ENCODE measurements at regions of chr1 and their contacts with region 1.

Region 1: DNA sequence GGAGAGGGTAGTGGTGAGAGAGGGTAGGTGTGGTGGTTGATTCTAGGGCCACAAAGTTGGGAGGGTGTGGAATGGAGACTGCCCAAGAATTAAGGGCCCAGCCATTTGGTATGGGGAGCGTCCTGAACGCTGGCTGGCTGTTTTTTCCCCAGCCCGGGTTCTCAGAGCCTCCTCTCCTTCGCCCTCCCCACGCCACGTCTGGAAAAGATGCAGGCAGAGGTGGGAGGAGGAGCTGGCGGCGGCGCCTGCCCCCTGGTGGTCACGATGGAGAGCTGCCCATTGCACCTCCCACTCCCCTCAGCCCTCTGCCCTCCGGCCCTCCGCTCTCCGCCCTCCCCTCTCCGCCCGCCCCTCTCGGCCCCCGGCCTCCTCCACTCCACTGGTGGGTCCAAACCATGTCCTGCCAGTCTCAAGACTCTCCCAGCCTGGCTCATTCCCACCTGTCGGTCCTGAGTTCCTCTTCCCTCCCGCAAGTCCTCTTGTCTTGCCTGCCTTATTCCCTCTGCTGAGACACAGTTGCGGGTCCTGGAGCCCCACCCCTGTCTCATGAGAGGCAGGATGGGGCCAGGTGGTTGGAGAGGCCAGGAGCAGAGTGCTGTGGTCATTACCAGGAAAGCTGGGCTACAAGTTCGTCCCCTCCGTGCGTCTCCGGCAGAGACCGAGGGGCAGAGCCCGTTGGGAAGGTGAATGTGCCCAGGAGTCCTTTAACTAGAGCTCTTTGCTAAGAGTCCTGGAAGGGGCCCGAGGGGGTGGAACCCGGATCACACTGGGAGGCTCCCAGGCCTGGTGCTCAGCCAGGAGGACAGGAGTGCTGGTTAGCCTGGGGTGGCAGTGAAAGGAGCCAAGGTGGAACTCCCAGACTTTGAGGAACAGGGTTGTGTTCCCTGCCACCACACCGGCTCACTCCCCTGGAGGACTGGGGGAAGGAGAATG is 22.6 kb downstream of the ETNK2 start:
- DNase-seq: no peak
- H3K4me3 ChIP-seq: no peak overlapping the region
- CTCF ChIP-seq: peak; percentile 96

Region 2: DNA sequence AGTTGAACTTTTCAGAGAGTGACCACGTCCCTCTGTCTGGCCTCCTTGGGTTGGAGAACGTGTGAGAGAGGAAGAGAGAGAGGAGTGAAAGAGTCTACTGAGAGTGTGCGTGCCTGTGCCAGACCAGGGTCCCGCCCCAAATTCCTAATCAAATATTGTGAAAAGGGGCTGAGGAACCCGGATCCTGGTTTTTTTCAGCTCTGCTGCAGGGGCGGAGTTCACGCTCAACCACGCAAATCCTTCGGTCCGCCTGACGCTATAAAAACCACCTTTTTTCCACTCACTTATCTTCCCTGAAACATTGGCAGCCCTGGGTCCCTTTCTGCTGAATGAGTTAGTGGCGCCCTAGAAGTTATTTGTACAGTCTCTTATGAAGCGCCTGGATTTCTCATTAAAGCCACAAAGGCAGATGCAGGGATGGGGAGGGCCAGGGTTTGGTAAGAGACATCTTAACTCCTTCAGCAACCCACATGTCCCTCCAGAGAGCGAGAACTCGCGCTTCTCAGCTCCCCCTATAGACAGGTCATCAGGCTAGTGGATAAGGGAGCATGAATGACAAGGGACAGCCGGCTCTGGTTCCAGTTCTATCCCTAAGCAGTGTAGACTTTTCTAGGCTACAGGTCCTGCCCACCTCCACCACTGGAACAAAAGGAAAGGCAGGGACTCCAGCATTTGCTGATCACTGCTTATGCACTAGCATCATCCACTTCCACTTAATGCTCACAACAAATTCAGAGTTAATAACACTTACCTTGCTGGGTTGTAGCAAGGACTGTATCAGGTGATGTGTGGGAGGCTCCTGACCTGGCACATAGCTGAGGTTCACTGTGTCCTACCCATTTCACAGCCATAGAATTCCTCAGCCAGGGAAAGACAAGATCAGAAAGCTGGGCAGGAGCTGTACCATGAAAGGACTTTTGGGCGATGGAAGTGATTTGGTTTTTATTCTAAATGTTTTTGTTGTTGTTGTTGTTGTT is 777.9 kb before region 1 on chr1 and contains the start of gene FMOD:
- CTCF ChIA-PET with region 1: no interaction called
- POLR2A ChIA-PET with region 1: no interaction called
- DNase-seq: no peak
- H3K4me3 ChIP-seq: peak within 1 kb of the TSS; percentile 6; the same call in 1 of the 2 replicates
- CTCF ChIP-seq: no peak

Region 3: DNA sequence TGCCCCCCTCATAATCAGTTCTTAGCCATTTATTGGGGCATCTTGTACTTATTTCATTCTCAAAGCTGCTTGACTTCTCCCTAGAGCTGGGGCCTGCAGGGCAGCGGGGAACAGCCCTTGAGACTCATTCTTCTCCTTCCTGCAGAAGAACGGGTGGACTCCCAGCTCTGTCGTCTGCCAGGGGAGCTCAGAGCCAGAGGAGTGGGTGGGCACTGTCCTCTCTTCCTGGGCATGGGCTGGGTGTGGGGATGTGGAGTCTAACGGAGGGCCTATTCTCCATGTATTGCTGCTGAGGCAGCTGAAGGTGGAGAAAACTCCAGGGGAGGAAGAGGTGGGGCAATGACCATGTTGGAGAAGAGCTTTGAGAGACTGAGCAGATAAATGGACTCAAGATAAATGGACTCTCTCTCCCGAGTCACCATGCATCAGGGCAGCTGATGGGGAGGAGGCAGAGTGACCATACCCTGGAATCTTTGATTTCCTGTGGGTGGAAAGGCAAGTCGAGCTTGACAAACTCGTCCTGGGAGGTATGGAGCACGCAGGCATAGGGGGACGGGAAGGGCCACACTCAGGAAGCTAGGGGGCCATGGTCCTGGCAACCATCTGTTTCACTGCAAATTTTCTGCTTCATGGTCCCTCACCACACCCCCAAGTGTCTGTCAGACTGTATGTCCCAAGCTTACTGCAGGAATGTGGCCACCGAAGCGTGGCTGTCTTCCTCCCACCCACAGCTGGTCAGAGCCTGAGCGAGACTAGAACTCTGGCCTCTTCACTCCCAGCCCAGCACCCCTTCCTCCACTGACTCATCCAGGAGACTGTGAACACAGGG is 559.5 kb before region 1 on chr1:
- CTCF ChIA-PET with region 1: no interaction called
- POLR2A ChIA-PET with region 1: no interaction called
- DNase-seq: no peak
- H3K4me3 ChIP-seq: no peak overlapping the region
- CTCF ChIP-seq: no peak

Region 4: DNA sequence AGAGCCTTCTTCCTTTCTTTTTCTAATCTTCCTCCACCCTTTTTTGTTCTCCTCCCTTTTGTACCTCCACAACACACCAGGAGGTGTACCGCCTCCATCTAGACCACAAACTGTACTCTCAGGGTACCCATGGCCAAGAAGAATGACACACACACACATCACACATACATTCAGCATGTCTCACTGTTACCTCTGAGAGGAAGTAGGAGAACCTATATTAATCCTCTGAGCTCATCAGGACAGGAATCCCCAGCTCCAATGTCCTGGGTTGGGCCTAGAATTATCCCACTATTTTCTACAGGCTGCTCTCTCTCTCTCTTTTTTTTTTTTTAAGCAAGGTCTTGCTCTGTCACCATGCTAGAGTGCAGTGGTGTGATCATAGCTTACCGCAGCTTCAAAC is 465.9 kb before region 1 on chr1:
- CTCF ChIA-PET with region 1: no interaction called
- POLR2A ChIA-PET with region 1: no interaction called
- DNase-seq: peak; percentile 82
- H3K4me3 ChIP-seq: no peak overlapping the region
- CTCF ChIP-seq: no peak

Region 5: DNA sequence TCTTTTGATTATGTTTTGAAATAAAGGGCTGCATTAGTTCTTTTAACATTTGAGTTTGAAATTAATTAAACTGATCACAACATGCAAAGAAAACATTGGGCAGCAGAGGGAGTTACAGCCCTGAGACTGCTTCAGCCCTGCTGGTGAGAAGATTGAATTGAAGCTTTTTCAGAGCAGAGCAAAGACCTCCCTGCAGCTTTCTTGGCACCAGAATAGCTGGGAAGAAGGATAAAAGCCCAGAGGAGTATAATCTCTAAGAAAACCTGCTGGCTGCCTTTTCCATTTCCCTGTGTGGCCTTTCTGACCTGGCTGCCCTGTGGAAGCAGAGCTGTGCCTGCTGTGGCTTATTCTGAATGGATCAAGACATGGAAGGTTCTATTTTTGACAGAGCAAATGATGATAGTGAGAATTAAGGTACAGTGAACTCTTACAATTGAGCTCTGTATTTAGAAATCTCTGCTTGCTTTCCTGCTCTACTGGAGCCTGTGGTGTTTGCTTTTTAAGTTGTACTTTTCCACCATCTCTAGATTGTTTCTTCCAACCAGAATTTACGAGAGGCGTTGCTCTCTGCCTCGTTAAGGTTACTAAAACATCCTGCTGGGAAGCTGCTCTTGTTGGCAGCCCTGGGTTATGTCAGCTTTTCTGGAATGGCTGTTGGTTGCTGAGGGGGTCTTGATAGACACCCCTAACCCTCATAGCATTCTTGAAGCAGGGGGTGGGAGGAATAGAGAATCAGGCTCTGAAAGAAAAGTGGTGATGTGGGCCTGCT is 257.9 kb before region 1 on chr1:
- CTCF ChIA-PET with region 1: interaction called, 1,069 read pairs
- POLR2A ChIA-PET with region 1: interaction called, 27 read pairs
- DNase-seq: no peak
- H3K4me3 ChIP-seq: no peak overlapping the region
- CTCF ChIP-seq: peak; percentile 91

Region 6: GRCh38 chr1:203888807-203889251 is 240.4 kb before region 1 on chr1:
- CTCF ChIA-PET with region 1: interaction called, 11 read pairs
- POLR2A ChIA-PET with region 1: no interaction called
- DNase-seq: no peak
- H3K4me3 ChIP-seq: no peak overlapping the region
- CTCF ChIP-seq: no peak

Region 7: GRCh38 chr1:204098683-204099082 is 30.5 kb before region 1 on chr1:
- CTCF ChIA-PET with region 1: interaction called, 10 read pairs
- POLR2A ChIA-PET with region 1: no interaction called
- DNase-seq: no peak
- H3K4me3 ChIP-seq: no peak overlapping the region
- CTCF ChIP-seq: no peak

Region 8: DNA sequence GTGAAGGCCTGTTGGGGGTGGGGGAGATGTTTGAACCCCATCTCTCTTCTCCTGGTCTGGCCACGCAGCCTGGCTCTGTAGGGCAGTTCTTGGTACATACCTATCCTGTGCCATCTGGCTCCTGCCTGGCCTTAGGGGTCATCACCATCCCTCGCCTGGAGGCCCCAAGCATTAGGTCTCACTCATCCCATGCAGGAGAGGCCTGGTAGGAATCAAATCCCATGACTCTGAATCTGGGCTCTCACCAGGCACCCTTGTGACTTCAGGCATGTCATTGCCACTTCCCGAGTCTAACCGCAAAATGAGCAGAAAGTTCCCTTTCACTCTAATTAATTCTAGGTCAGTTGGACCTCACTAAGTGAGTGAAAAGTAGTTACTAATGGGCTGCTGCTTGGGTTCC is 14.6 kb before region 1 on chr1:
- CTCF ChIA-PET with region 1: interaction called, 42 read pairs
- POLR2A ChIA-PET with region 1: no interaction called
- DNase-seq: no peak
- H3K4me3 ChIP-seq: no peak overlapping the region
- CTCF ChIP-seq: no peak

Region 9: DNA sequence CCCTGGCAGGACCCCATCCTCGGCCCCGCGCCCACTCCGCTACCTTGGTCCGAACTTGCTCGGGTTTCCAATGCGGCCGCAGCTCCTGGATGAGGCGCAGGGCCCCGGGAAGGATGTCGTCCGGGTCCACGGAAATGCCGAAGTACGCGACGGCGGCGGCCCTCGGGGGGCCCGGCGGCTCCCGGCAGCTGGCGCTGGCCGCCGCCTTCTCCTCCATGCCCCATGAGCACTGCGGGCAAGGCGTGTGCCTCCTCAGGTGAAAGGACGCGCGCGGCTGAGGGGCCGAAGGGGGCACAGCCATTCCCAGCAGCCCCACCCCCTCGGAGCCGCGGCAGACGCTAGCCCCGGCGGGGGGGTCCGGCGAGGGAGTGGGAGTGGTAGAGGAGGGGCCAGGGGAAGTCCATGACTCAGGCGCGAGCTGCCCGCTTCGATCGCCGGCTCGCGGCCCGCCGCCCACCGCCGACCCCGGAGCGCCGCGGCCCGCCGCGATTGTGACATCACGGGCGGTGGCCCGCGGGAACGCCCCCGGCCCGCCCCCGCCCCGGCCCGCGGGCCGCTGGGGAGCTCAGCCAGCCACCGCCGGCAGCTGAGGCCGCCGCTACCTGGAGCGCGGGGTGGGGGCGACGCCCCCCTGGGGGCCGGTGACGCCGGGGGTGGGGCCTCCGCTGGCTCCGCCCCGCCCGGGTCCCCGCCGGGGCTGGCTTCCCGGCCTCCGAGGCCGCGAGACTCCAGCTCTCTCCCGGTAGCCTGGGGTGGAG is 22.5 kb after region 1 on chr1 and contains the start of gene ETNK2:
- CTCF ChIA-PET with region 1: interaction called, 12 read pairs
- POLR2A ChIA-PET with region 1: interaction called, 3 read pairs
- DNase-seq: no peak
- H3K4me3 ChIP-seq: peak within 1 kb of the TSS; percentile 66
- CTCF ChIP-seq: no peak

Region 10: DNA sequence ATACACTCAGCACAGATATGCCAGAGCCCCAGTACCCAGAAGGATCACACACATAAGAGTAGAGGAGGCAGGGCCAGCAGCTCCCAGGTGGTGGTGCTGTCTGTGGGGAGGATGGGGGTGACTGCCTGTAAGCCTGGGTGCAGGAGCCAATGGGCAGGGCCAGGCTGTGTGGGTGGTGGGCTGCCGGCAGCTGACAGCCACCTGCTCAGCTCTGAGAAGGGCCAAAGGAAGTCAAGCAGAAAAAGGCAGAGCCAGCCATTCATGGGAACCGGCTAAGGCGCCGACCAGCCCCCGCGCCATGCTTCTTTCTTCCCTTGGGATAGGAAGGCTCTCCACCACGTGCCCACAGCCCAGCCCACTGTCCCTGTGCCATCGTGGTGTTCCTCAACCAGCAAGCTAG is 351.3 kb after region 1 on chr1:
- CTCF ChIA-PET with region 1: no interaction called
- POLR2A ChIA-PET with region 1: no interaction called
- DNase-seq: no peak
- H3K4me3 ChIP-seq: no peak overlapping the region
- CTCF ChIP-seq: no peak